Right ventricle myocardium inferior (tissue), 1 donor: ENCODE measurements at regions of chr14 and their contacts with region 1.

Region 1: DNA sequence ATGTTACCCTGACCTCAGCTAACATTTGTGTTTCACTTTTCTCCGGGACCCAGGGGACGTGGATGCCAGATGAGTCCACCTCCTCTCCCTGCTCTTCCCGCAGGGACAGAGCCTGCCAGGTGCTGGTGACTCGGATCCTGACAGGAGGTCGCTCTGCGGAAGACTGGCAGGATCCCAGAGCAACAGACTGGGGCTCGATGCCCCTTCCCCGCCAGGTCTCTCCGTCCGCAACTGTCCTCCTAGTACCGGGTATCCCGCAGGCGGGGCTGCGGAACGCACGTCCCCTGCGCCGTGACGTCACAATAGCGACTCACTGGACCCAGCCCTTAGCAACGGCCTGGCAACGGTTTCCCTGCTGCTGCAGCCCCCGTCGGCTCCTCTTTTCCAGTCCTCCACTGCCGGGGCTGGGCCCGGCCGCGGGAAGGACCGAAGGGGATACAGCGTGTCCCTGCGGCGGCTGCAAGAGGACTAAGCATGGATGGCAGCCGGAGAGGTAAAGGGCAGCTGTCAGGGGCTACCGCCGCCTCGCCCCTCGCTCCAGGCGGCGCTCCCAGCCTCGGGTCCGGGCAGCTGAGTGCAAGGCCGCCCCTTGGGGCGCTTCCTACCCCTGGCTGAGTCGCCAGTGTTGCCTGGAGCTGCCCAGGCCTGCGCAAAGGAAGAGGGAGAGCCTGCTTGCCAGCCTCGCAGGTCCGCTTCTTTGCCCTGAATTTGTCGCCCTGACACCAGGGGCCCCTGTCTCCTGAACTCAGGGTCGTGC is at the start of gene SPATA7:
- DNase-seq: peak; percentile 96
- ATAC-seq: peak; percentile 99
- total RNA-seq, gene SPATA7: 8.0 TPM

Region 2: GRCh38 chr14:87992718-87993628 is 392.6 kb before region 1 on chr14 and contains the start of gene GALC:
- intact Hi-C with region 1: loop called (anchors 5 kb)
- DNase-seq: peak; percentile 99
- ATAC-seq: peak; percentile 96
- total RNA-seq, gene GALC: 11.1 TPM

Region 3: GRCh38 chr14:88189417-88190191 is 195.9 kb before region 1 on chr14:
- intact Hi-C with region 1: loop called (anchors 10 kb)
- DNase-seq: no peak
- ATAC-seq: peak; percentile 93

Region 4: DNA sequence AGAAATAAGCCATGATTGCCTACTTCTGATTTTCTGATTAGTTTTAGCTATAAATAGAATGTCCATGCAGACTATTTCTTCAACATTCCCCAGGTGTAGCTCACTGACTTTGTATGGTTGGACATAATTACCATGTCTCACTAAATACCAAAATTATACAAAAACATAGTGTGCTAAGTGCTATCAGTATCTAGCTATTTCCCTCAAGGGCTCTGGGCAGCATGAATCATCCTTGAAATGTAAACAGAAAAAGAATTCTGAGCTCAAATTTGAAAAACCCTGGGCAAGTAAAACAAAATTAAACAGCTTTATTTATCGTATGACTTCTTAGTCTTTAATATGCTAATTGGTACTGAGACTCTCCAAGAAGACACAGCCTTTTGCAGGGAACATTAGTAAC is 82.9 kb after region 1 on chr14:
- intact Hi-C with region 1: no loop called
- DNase-seq: no peak
- ATAC-seq: no peak

Region 5: GRCh38 chr14:88481794-88482193 is 96.3 kb after region 1 on chr14:
- intact Hi-C with region 1: no loop called
- DNase-seq: no peak
- ATAC-seq: peak; percentile 77

Region 6: DNA sequence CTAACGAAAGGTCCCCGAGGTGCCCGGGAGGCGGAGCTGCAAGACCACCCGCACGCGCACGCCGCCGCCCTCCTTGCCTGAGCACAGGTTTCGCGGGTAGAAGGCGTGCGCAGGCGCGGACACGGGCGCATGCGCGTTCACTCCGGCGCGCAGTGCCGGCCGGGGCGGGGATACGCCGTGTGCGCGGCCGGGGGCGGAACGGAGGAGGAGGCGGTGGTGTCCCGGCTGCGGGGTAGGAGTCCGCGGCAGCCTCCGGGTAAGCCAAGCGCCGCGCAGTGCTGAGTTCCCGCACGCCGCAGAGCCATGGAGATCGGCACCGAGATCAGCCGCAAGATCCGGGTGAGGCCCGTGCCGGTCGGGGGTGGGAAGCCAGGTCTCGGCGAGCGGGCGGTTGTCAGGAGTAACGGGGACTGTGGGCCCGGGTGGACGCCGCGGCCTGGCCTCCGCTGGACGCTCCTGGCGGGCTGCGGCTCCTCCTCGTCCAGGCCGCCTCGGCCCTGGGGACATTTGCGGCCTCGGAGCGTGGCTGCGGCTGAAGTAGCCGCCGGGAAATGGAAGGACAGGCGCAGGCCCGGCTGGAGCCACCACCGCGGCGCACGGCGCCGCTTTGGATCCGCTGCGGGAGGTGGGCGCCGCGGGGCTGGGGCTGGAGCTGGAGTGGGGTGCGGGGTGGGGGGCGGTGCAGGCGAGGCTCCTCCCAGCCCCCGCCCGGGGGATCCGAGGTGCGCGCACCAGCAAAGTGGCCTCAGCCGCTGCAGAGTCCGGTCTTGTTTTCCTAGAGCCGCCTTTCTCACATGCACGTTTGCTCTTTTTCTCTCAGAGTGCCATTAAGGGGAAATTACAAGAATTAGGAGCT is 177.5 kb after region 1 on chr14 and contains the start of gene ZC3H14:
- intact Hi-C with region 1: loop called (anchors 10 kb)
- DNase-seq: peak; percentile 93
- ATAC-seq: peak; percentile 99
- total RNA-seq, gene ZC3H14: 38.3 TPM